ENCODE measurements at regions of chr1 and their contacts with region 1.

Region 1: DNA sequence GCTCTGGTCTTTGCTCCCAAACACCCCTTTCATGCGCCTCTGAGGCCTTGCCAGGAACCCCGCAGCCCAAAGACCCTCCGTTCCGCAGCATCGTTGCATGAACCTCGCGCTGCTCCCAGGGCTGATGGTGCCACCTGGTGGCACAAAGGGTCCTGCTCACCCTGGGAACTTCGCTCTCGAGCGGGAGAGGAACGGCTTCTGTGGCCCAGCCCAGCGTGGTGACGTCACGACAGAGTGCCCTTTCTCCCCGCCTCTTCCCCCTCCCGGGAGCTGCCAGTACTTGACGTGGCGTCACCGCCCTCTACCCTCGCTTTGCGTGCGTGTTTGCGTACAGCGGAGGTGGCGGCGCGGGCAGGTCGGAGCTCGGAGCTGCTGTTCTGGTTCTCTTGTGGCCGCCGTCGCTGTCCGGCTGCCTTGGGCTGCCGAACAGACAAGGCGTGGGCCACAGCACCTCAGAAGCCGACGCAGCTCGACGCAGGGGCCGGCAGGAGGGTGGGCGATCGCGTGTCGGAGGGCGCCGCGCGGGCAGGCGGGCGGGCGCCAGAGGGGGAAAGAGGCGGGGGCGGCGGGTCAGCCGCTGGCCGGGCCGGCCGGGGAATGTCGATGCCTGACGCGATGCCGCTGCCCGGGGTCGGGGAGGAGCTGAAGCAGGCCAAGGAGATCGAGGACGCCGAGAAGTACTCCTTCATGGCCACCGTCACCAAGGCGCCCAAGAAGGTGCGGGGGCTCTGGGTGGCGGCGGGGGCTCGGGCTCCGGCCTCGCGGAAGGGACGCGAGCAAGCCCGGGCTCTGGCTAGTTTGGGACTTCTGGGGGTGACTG is at the start of gene AHCYL1:
- DNase-seq: peak; percentile 98
- H3K4me3 ChIP-seq: peak within 1 kb of the TSS; percentile 86
- H3K27ac ChIP-seq: peak within 1 kb of the TSS; percentile 95
- H3K27me3 ChIP-seq: no peaks in the 10 kb centered on the region
- CTCF ChIP-seq: peak; percentile 98
- polyA plus RNA-seq, gene AHCYL1: 120 and 133 TPM in 2 replicates

Region 2: GRCh38 chr1:109548321-109549267 is 436.1 kb before region 1 on chr1 and contains the start of gene GNAI3:
- CTCF ChIA-PET with region 1: interaction called, 21 read pairs
- POLR2A ChIA-PET with region 1: interaction called, 7 read pairs
- DNase-seq: peak; percentile 85
- H3K4me3 ChIP-seq: peak within 1 kb of the TSS; percentile 98
- H3K27ac ChIP-seq: peak within 1 kb of the TSS; percentile 83
- H3K27me3 ChIP-seq: no peaks in the 10 kb centered on the region
- CTCF ChIP-seq: no peak
- polyA plus RNA-seq, gene GNAI3: 10.2 and 14.8 TPM in 2 replicates

Region 3: DNA sequence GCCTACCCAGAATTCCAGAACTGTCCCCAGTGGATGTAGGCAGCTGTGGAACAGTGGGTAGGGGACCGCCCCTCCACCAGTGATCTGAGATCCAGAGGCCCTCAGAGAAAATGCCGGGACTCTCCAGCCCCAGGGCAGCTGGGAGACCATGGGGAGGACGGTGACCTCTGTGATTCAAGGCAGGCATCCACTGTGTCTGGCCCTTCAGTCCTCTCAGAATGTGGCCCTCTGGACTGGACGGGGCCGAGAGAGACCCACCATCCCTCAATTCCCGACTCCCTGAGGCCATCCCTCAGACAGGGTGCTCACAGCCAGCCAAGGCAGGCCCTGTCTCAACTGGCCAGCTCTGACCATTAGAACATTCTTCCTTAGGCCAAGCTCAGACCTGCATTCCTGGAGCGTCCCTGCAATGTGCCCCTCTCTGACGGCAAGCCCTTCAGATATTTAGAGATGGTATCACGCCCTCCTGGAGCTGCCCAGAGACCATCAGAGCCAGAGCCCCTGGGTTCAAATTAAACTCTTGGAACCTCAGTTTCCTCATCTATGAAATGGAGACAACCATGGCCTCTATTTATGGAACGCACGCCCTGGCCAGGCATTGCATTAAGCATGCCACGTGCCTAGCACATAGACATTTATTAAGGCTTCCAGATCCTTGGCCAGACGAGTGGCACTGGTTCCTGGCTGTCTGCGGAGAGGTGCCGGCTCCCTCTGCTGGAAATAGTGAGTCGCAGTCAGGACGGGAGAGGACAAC is 211.3 kb before region 1 on chr1:
- CTCF ChIA-PET with region 1: interaction called, 535 read pairs
- POLR2A ChIA-PET with region 1: interaction called, 20 read pairs
- DNase-seq: peak; percentile 71
- H3K4me3 ChIP-seq: no peak overlapping the region
- H3K27ac ChIP-seq: no peak overlapping the region
- H3K27me3 ChIP-seq: no peaks in the 10 kb centered on the region
- CTCF ChIP-seq: peak; percentile 98

Region 4: DNA sequence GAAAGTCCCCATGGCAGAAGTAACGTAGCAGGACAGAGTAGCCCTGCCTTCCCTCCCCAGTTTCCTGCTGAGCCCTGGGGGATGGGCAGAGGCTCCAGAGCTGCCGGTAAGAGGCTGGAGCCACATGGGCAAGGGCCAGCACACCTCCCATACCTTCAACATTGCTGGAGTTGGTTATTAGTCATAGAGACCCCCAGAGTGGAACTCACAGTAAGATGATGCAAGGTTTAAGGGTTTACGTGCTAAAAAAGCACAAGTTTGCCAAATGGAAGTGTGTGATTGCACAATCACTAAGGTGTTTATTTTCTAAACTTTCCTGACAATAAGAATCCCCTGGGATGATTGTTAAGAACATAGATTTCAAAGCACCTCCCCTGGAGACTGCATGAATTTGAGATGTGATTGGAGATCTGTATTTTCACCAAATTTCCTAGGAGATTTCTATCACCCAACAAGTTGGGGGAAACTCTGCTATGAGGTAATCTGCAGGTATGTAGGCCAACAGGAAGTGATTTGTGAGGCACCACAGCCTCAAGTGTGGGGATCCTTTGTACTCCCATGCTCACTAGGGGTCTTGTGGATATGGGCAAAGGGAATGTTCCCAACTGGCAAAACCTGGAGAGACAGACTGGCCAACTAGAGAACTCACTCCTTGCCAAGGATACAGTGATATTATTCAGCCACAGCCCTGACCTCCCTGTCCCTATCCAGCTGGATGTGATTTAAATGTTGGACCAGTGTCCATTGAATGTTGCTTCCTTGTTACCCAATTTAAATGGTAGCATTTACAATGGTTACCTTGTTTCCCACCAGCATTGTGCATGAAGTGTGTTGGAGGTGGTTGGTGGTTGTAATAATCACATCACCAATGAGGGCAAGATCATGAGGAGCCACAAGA is 111.1 kb before region 1 on chr1:
- CTCF ChIA-PET with region 1: interaction called, 10 read pairs
- POLR2A ChIA-PET with region 1: interaction called, 8 read pairs
- DNase-seq: no peak
- H3K4me3 ChIP-seq: no peak overlapping the region
- H3K27ac ChIP-seq: no peak overlapping the region
- H3K27me3 ChIP-seq: no peaks in the 10 kb centered on the region
- CTCF ChIP-seq: no peak

Region 5: GRCh38 chr1:109917768-109918606 is 66.7 kb before region 1 on chr1:
- CTCF ChIA-PET with region 1: interaction called, 26 read pairs
- POLR2A ChIA-PET with region 1: interaction called, 14 read pairs
- DNase-seq: no peak
- H3K4me3 ChIP-seq: no peak overlapping the region
- H3K27ac ChIP-seq: peak overlapping the region; percentile 74
- H3K27me3 ChIP-seq: no peaks in the 10 kb centered on the region
- CTCF ChIP-seq: 0 out of 2 replicates have a peak, but pooled peaks have one; percentile 29

Region 6: DNA sequence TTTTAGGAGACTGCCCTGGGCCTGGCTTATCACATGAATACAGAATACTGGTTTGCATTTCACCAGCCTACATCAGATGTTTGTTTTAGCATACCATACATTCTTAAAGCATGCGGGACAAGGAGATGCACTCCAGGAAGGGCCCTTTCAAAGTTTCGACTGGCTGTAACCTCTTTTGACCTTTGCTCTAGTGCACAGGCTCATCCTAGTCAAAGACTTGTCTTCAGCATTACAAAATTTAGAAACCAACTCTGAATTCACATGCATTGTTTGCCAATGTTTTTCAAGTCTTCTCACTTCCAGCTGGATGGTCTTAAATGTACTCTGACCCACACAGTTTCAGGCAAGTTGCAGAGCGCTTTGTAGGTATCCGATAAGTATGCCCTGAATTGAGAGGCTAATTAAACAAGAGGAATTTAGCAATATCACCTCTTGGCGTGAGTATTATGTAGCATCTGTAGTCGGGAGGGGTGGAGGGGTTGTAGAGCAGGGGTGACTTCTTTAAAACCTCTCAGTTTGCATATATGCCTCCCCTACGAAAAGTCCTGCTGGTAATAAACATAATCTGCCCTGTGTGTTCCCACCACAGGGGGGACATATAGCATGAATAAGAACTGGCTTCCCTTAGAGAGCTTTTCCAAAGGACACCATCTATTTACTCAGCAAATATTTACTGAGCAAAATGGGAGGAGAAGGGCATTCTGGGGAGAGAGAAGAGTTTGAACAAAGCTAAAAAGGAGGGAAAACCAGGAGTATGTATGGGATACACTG is 24.5 kb before region 1 on chr1:
- CTCF ChIA-PET with region 1: interaction called, 29 read pairs
- POLR2A ChIA-PET with region 1: interaction called, 6 read pairs
- DNase-seq: peak; percentile 61
- H3K4me3 ChIP-seq: no peak overlapping the region
- H3K27ac ChIP-seq: peak overlapping the region; percentile 86
- H3K27me3 ChIP-seq: no peaks in the 10 kb centered on the region
- CTCF ChIP-seq: peak; percentile 18; the same call in 1 of the 2 replicates

Region 7: GRCh38 chr1:110011527-110012041 is 26.9 kb after region 1 on chr1:
- CTCF ChIA-PET with region 1: interaction called, 31 read pairs
- POLR2A ChIA-PET with region 1: interaction called, 3 read pairs
- DNase-seq: peak; percentile 34
- H3K4me3 ChIP-seq: no peak overlapping the region
- H3K27ac ChIP-seq: no peak overlapping the region
- H3K27me3 ChIP-seq: no peaks in the 10 kb centered on the region
- CTCF ChIP-seq: peak; percentile 69